Prostate gland (tissue), 2 donors: ENCODE measurements at regions of chr11 and their contacts with region 1.

Region 1: DNA sequence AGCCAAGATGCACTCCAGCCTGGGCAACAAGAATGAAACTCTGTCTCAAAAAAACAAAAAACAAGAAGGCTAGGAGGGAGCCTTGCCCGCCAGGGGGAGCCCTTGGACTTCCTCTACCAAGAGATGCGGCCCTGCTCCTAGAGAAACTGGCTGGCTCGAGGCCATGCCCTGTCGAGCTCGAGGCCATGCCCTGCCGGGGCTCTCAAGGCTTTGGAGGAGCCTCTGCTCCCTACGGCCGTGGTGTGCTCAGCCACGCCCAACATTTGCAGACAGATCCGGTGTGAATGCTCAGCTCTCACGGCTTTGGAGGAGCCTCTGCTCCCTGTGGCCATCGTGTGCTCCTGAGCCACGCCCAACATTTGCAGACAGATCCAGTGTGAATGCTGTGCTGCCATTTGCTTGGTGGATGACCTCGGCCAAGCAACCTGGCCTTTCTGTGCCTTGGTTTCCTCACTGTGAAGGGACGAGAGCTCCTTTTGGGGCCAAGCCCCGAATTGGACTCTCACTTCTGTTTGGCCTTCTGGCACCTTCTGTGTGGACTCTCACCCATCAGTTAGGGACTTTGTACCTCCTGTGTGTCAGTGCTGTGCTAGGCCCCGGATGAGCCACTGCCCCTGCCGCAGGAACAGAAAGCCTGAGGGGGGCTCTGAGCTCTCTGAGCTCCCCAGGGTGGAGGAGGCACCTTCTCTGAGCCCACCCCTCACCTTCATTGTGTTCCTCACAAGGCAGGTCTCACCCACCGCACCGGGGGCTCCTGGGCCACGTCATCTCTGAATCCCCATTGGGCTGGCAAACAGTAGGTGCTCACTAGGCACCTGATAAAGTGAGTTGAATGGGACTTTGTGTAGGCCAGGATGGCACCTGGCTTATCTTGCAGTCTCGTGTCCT is 14.1 kb downstream of the C11orf24 start:
- DNase-seq: peak; percentile 94
- H3K4me3 ChIP-seq: no peak overlapping the region
- H3K27ac ChIP-seq: no peak overlapping the region
- H3K4me1 ChIP-seq: no peaks in the 10 kb centered on the region
- H3K27me3 ChIP-seq: no peaks in the 10 kb centered on the region
- CTCF ChIP-seq: peak; percentile 83 to 95 (median 88)
- POLR2A ChIP-seq: no peak

Region 2: GRCh38 chr11:68297812-68298658 is 40.3 kb after region 1 on chr11:
- intact Hi-C with region 1: loop called (anchors 2 kb)
- DNase-seq: peak; percentile 53
- H3K4me3 ChIP-seq: no peak overlapping the region
- H3K27ac ChIP-seq: no peak overlapping the region
- H3K4me1 ChIP-seq: no peaks in the 10 kb centered on the region
- H3K27me3 ChIP-seq: no peaks in the 10 kb centered on the region
- CTCF ChIP-seq: peak; percentile 92 to 98 (median 96)
- POLR2A ChIP-seq: no peak

Region 3: GRCh38 chr11:68441466-68442230 is 183.9 kb after region 1 on chr11:
- intact Hi-C with region 1: loop called (anchors 2 kb)
- DNase-seq: no peak
- H3K4me3 ChIP-seq: no peak overlapping the region
- H3K27ac ChIP-seq: no peak overlapping the region
- H3K4me1 ChIP-seq: no peaks in the 10 kb centered on the region
- H3K27me3 ChIP-seq: no peaks in the 10 kb centered on the region
- CTCF ChIP-seq: no peak
- POLR2A ChIP-seq: no peak